CD14-positive monocyte (primary cell): ENCODE measurements at regions of chr7 and their contacts with region 1.

Region 1: GRCh38 chr7:5088906-5089305 is 43.2 kb downstream of the RBAK start:
- DNase-seq: no peak
- H3K4me3 ChIP-seq: no peak overlapping the region
- H3K4me3 Mint-ChIP-seq: no peak overlapping the region
- H3K27ac ChIP-seq: no peak overlapping the region
- H3K27ac Mint-ChIP-seq: peak overlapping the region in 1 of 7 donors; percentile 35
- H3K4me1 ChIP-seq: peaks cover 0 to 5% of the 10 kb centered on the region in 2 donors
- H3K4me1 Mint-ChIP-seq: peaks cover 10% of the 10 kb centered on the region
- H3K27me3 ChIP-seq: no peaks in the 10 kb centered on the region
- H3K27me3 Mint-ChIP-seq: peaks cover 16 to 20% (median 16%) of the 10 kb centered on the region in 3 donors
- CTCF ChIP-seq: no peak

Region 2: GRCh38 chr7:4531236-4531635 is 557.7 kb before region 1 on chr7:
- intact Hi-C with region 1: no loop called
- DNase-seq: no peak
- H3K4me3 ChIP-seq: no peak overlapping the region
- H3K4me3 Mint-ChIP-seq: no peak overlapping the region
- H3K27ac ChIP-seq: no peak overlapping the region
- H3K27ac Mint-ChIP-seq: no peak overlapping the region
- H3K4me1 ChIP-seq: no peaks in the 10 kb centered on the region
- H3K4me1 Mint-ChIP-seq: no peaks in the 10 kb centered on the region
- H3K27me3 ChIP-seq: no peaks in the 10 kb centered on the region
- H3K27me3 Mint-ChIP-seq: peaks cover 0 to 5% (median 2%) of the 10 kb centered on the region in 3 donors
- CTCF ChIP-seq: no peak

Region 3: DNA sequence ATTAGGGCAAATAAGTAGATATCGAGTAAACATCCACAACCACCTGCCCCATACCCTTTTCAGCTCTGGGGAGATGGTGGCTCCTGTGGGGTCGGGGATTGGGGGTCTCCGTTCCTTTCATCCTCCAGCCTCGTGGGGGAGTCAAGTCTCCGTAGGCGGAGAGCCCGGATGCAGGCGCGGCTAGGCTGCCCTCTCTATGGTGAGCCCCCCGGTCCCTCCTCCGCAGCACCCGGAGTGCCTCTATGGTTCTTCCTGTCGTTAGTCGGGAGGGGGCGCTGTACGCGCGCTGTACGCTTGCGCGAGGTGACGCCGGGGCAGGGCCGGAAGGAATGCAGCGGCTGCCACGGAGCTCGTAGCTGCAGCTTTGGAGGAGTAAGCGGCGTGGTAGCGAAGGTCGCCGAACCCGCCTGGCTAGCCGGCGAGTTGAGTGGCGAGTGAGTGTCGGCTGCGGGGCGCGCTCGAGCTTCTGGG is 115.1 kb before region 1 on chr7:
- intact Hi-C with region 1: loop called (anchors 5 kb)
- DNase-seq: peak; percentile 86 to 89 (median 86)
- H3K4me3 ChIP-seq: peak overlapping the region; percentile 45 to 82 (median 78)
- H3K4me3 Mint-ChIP-seq: peak overlapping the region; percentile 93 to 95
- H3K27ac ChIP-seq: peak overlapping the region; percentile 67 to 83
- H3K27ac Mint-ChIP-seq: peak overlapping the region; percentile 80 to 98 (median 95)
- H3K4me1 ChIP-seq: peaks cover 8 to 10% of the 10 kb centered on the region in 2 donors
- H3K4me1 Mint-ChIP-seq: peaks cover 20% of the 10 kb centered on the region
- H3K27me3 ChIP-seq: no peaks in the 10 kb centered on the region
- H3K27me3 Mint-ChIP-seq: peaks cover 5 to 9% (median 6%) of the 10 kb centered on the region in 3 donors
- CTCF ChIP-seq: peak; percentile 84

Region 4: DNA sequence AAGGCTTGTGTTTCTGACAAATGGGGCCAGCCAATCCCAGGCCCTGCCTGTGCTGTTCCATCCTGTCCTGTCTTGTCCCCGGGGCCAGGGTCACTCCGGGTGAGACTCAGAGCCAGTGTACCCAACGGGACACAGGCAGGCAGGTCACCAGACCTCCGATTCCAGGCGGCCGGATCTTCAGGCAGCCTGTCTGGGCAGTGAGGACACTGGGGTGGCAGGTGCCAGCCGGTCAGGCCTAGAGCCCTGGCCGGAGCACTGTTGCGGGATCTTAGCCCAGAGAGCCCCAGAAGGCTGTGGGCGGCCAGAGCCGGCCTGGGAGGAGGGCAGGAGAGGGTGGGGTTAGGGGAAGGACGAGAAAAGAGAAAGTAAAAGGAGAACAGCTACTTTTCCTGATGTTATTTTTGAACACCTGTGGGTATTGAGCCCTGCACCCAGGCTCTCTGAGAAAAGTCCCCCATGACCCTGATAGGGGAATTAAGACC is 469.1 kb after region 1 on chr7:
- intact Hi-C with region 1: no loop called
- DNase-seq: peak in 2 of 3 donors; percentile 37 to 44
- H3K4me3 ChIP-seq: peak overlapping the region; percentile 44 to 87 (median 80)
- H3K4me3 Mint-ChIP-seq: peak overlapping the region; percentile 80 to 94
- H3K27ac ChIP-seq: peak overlapping the region; percentile 91 to 94
- H3K27ac Mint-ChIP-seq: peak overlapping the region; percentile 92 to 98 (median 96)
- H3K4me1 ChIP-seq: peaks cover 49 to 76% of the 10 kb centered on the region in 2 donors
- H3K4me1 Mint-ChIP-seq: peaks cover 49% of the 10 kb centered on the region
- H3K27me3 ChIP-seq: no peaks in the 10 kb centered on the region
- H3K27me3 Mint-ChIP-seq: peaks cover 0 to 1% (median 0%) of the 10 kb centered on the region in 3 donors
- CTCF ChIP-seq: no peak